ENCODE measurements at regions of chr4 and their contacts with region 1.

Region 1: GRCh38 chr4:72919937-72920336 is 149.6 kb downstream of the COX18 start:
- DNase-seq: no peak
- ATAC-seq: no peak

Region 2: GRCh38 chr4:72701987-72702819 is 217.7 kb before region 1 on chr4:
- intact Hi-C with region 1: loop called (anchors 10 kb)
- DNase-seq: no peak
- ATAC-seq: peak; percentile 61

Region 3: GRCh38 chr4:73137121-73137520 is 217.2 kb after region 1 on chr4:
- intact Hi-C with region 1: no loop called
- DNase-seq: no peak
- ATAC-seq: no peak

Measured in left ventricle myocardium superior (tissue), 1 donor.